HEK293T (cell line): ENCODE measurements at regions of chr19 and their contacts with region 1.

Region 1: GRCh38 chr19:33373701-33374421 is at the start of gene CEBPG:
- DNase-seq: peak; percentile 70

Region 2: GRCh38 chr19:33296241-33296971 is 77.5 kb before region 1 on chr19:
- CTCF ChIA-PET with region 1: no interaction called
- POLR2A ChIA-PET with region 1: interaction called, 14 read pairs
- DNase-seq: no peak

Region 3: DNA sequence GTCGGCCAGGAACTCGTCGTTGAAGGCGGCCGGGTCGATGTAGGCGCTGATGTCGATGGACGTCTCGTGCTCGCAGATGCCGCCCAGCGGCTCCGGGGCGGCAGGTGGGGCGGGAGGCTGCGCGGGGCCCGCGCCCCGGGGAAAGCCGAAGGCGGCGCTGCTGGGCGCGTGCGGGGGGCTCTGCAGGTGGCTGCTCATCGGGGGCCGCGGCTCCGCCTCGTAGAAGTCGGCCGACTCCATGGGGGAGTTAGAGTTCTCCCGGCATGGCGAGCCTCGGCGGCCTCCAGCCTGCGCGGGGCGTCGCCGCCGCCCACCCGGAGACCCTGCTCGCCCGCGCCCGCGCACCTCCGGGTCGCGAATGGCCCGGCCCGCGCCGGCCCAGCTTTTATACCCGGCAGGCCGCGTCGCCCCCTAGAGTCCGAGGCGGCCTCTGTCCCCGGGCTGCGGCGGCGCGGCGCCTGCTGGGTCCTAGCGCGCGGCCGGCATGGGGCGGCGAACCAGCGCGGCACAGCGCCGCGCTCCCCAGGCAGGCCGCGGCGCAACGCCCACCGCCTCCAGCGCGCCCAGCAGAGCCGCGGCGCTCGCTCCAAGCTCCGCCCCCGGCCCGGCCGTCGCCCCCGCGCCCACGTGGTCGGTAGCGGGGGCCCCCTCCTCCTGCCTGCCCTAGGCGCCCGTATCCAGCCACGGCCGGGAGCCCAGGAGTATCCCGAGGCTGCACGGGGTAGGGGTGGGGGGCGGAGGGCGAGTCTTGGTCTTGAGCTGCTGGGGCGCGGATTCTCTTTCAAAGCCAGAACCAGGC is 71.5 kb before region 1 on chr19 and contains the start of gene CEBPA:
- CTCF ChIA-PET with region 1: no interaction called
- POLR2A ChIA-PET with region 1: interaction called, 37 read pairs
- DNase-seq: peak; percentile 93

Region 4: GRCh38 chr19:33418461-33418860 is 44.6 kb after region 1 on chr19:
- CTCF ChIA-PET with region 1: no interaction called
- POLR2A ChIA-PET with region 1: no interaction called
- DNase-seq: no peak